ENCODE measurements at regions of chr7 and their contacts with region 1.

Region 1: GRCh38 chr7:3028071-3028757 is 15.5 kb downstream of the CARD11 start:
- DNase-seq: peak; percentile 89
- H3K4me3 Mint-ChIP-seq: peak overlapping the region; percentile 61
- H3K27ac Mint-ChIP-seq: peak overlapping the region; percentile 96
- H3K4me1 Mint-ChIP-seq: peaks cover 51% of the 10 kb centered on the region
- H3K27me3 Mint-ChIP-seq: no peaks in the 10 kb centered on the region

Region 2: DNA sequence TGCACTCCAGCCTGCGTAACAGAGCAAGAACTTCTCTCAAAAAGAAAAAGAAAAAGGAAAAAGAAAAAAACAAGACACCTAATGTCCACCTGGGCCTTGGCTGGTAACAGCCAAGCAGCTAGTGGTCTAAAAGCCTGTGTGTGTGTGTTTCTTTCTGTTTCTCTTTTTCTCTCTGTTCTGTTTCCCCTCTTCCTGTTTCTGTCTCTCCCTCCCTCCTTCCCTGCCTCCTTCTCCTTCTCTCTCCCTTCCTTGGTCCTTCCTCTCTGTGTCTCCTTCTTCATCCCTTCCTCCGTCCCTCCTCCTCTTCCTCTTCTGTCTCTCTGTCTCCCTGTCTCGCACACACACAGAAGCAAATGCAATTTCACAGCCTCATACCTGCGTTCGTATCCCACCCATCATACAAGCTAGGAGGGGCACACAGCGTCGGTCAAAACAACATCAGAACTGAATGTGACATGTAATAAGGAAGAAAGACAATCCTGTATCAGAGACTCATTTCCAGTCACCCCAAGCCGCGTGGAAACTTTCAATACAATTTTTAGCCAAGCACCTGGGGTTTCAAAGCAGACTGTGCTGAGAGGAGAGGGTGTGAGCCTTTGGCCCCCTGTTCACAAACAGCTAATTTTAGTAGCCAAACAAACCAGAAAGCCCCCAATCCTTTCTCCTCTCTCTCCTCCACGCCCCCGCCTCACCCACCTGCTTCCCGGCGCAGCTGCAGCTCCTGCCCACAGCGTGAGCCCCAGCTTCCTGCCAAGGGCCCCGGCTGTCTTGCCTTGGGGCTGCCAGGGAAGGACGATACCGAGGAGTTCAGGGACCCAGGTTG is 133.9 kb before region 1 on chr7:
- CTCF ChIA-PET with region 1: no interaction called
- POLR2A ChIA-PET with region 1: interaction called, 4 read pairs
- intact Hi-C with region 1: loop called (anchors 5 kb)
- DNase-seq: peak; percentile 84
- H3K4me3 Mint-ChIP-seq: peak overlapping the region; percentile 73
- H3K27ac Mint-ChIP-seq: peak overlapping the region; percentile 94
- H3K4me1 Mint-ChIP-seq: peaks cover 23% of the 10 kb centered on the region
- H3K27me3 Mint-ChIP-seq: no peaks in the 10 kb centered on the region

Region 3: DNA sequence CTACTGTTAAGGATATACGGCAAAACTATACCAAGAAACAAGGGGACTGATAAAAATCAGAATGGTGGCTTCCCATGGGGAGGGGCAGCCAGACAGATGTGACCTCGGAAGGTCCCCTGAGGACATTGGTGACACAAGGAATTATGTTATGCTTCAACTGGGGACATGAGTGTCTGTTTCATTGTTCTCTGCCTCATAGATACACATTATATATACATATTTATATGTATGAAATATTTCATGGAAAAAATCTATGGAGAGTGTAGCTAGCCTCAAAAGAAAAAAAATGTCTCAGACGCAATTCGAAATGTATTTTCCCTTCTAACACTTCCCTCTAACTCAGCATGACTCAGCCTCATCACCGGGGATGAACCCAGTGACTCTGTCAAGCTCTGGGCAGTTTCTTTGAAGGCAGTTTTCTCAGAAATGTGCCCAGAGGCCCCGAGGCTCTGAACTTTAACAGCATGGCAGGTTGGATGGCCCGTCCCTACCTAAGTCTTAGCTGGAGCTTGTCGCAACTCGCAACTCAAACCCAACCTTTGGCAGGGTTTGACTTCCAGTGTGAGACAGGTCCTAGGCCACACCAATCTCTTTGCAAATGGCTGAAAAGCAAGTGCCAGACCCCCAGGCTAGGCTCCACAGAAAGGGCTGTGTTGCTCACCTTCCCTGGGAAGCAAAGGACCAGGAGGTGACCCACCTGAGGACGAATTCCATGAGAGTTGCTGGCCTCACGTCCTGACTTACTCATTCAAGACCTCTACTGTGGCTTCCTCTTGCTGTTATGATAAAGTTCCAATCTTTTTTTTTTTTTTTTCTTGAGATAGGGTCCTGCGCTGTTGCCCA is 71.5 kb before region 1 on chr7:
- CTCF ChIA-PET with region 1: no interaction called
- POLR2A ChIA-PET with region 1: interaction called, 3 read pairs
- intact Hi-C with region 1: loop called (anchors 5 kb)
- DNase-seq: peak; percentile 79
- H3K4me3 Mint-ChIP-seq: no peak overlapping the region
- H3K27ac Mint-ChIP-seq: peak overlapping the region; percentile 91
- H3K4me1 Mint-ChIP-seq: peaks cover 65% of the 10 kb centered on the region
- H3K27me3 Mint-ChIP-seq: no peaks in the 10 kb centered on the region

Region 4: DNA sequence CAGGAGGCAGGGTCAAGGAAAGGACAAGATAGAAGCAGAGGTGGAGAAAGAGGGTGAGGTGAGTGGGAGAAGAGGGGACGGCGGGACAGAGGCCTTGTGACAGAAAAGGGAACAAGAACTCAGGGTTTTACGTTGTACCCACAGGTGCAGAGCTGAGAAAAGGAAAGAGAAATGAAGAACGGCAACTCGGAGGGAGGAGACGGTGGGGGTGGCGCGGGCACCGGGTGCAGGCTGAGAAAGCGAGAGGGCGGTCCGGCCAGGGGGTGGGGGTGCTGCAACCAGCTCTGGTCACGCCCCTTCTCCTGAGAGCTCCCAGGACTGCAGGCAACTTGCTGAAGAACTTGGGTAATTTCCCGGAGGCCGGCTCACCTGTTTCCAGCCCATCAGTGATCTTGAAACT is 49.8 kb before region 1 on chr7:
- CTCF ChIA-PET with region 1: no interaction called
- POLR2A ChIA-PET with region 1: interaction called, 3 read pairs
- intact Hi-C with region 1: loop called (anchors 1 kb)
- DNase-seq: peak; percentile 97
- H3K4me3 Mint-ChIP-seq: peak overlapping the region; percentile 63
- H3K27ac Mint-ChIP-seq: peak overlapping the region; percentile 91
- H3K4me1 Mint-ChIP-seq: peaks cover 69% of the 10 kb centered on the region
- H3K27me3 Mint-ChIP-seq: no peaks in the 10 kb centered on the region

Region 5: DNA sequence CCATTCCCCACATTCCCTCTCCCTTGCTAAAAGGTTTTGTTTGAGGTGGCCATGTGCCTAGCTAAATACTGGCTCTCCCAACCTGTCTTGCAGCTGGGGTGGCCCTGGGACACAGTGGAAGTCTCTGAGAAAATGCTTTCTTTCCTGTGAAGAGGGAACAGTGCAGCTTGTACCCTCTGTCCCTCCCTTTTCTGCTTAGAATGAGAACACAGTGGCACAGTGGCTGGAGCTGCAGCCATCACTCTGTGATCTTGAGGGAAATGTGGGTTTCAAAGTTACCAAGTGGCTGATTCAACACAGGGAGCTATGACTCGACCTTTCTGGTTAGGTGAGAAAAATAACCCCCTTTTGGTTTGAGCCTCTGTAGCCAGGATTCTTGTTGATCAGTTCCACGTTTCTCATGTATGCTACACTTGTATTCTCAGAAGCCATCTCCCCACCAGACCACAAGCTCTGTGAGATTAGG is 78.2 kb after region 1 on chr7:
- CTCF ChIA-PET with region 1: no interaction called
- POLR2A ChIA-PET with region 1: no interaction called
- intact Hi-C with region 1: loop called (anchors 1 kb)
- DNase-seq: peak; percentile 80
- H3K4me3 Mint-ChIP-seq: no peak overlapping the region
- H3K27ac Mint-ChIP-seq: peak overlapping the region; percentile 84
- H3K4me1 Mint-ChIP-seq: peaks cover 70% of the 10 kb centered on the region
- H3K27me3 Mint-ChIP-seq: no peaks in the 10 kb centered on the region

Region 6: GRCh38 chr7:3194501-3195141 is 166.4 kb after region 1 on chr7:
- CTCF ChIA-PET with region 1: no interaction called
- POLR2A ChIA-PET with region 1: no interaction called
- intact Hi-C with region 1: no loop called
- DNase-seq: no peak
- H3K4me3 Mint-ChIP-seq: no peak overlapping the region
- H3K27ac Mint-ChIP-seq: no peak overlapping the region
- H3K4me1 Mint-ChIP-seq: no peaks in the 10 kb centered on the region
- H3K27me3 Mint-ChIP-seq: peaks cover 3% of the 10 kb centered on the region

Measured in activated CD4-positive, alpha-beta memory T cell treated with anti-CD3 and anti-CD28 coated beads for 36 hours (primary cell).